ENCODE measurements at regions of chr1 and their contacts with region 1.

Region 1: GRCh38 chr1:226772446-226773139 is 33.5 kb upstream of the ITPKB start:
- DNase-seq: no peak
- H3K4me3 ChIP-seq: no peak overlapping the region
- H3K27ac ChIP-seq: no peak overlapping the region
- H3K4me1 ChIP-seq: no peaks in the 10 kb centered on the region
- H3K27me3 ChIP-seq: no peaks in the 10 kb centered on the region
- CTCF ChIP-seq: no peak
- EP300 ChIP-seq: no peak
- POLR2A ChIP-seq: no peak

Region 2: GRCh38 chr1:226786550-226786949 is 14.0 kb after region 1 on chr1:
- intact Hi-C with region 1: loop called in 1 of 4 experiments (anchors 2 kb)
- DNase-seq: no peak
- H3K4me3 ChIP-seq: no peak overlapping the region
- H3K27ac ChIP-seq: no peak overlapping the region
- H3K4me1 ChIP-seq: no peaks in the 10 kb centered on the region
- H3K27me3 ChIP-seq: no peaks in the 10 kb centered on the region
- CTCF ChIP-seq: no peak
- EP300 ChIP-seq: no peak
- POLR2A ChIP-seq: no peak

Measured in ovary (tissue), 10 donors.